T-cell (primary cell): ENCODE measurements at regions of chr17 and their contacts with region 1.

Region 1: DNA sequence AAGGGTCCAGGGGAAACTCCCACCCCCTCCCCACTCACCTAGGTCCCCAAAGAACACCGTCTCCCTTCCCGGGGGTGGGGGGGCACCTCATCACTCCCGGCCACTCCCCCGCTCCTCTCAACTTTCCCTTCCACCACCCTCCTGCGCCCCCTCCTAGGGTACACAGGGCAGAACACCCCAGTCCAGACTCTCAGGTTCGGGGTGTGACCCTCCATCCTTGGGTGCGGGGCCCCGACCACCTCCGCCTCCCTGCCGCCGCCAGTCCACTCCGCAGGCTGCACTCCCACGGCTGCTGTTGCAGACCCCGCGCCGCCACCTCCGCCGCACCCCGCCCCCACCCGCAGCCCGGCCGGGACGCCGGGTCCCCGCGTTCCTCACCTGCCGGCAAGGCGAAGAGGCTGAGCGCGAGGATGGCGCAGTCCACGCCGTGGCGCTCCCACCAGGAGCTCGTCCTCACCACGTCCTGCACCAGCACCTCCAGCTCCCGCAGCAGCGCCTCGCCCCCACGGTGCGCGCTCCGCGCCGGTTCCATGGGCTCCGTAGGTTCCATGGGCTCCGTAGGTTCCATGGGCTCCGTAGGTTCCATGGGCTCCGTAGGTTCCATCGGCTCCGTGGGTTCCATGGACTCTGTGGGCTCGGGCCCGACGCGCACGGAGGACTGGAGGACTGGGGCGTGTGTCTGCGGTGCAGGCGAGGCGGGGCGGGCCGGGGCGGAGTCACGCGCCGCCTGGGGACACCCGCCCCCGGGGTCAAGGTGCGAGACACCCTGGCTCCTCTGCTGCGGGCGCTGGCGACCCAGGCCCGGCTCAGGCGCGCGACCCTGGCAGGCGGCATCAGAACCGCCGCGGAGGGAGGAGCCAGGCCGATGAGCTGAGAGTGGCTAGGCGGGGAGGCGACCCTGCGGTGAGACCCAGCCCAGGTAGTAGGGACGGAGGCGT is at the start of gene FADS6:
- DNase-seq: peak in 2 of 35 experiments; percentile 6 to 7
- ATAC-seq: peak; percentile 61 to 78 (median 70)
- H3K4me3 ChIP-seq: peak within 1 kb of the TSS; percentile 7 to 36
- H3K4me3 Mint-ChIP-seq: peak within 1 kb of the TSS; percentile 53 to 74 (median 67)
- H3K27ac ChIP-seq: no peak within 1 kb of the TSS
- H3K27ac Mint-ChIP-seq: peak within 1 kb of the TSS in 1 of 2 donors; percentile 34
- H3K4me1 ChIP-seq: peaks cover 0 to 6% of the 10 kb centered on the region in 2 experiments
- H3K4me1 Mint-ChIP-seq: peaks cover 0 to 8% (median 3%) of the 10 kb centered on the region in 3 donors
- H3K27me3 ChIP-seq: peaks cover 0 to 66% of the 10 kb centered on the region in 2 experiments
- H3K27me3 Mint-ChIP-seq: peaks cover 28 to 46% of the 10 kb centered on the region in 2 donors
- total RNA-seq, gene FADS6: not detected

Region 2: DNA sequence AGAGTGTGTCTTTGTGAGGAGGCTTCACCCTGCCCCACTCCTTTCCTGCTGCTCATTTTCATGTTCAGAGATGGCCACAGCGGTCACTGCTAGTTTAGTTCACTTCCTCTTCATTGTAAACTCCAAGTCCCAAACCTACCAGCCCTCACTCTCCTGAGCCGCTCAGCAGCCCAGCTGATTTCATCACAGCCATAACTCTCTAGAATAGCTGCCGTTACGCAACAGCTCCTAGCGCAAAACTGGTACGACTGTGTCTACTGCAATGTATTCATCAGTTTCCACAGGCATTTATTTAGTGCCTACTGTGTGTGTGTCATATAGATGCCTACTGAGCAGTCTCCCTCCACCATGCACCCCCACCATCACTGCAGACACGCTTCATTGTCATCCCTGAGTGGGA is 923.3 kb before region 1 on chr17:
- CTCF ChIA-PET with region 1: interaction called in 1 of 2 experiments, 10 read pairs
- POLR2A ChIA-PET with region 1: no interaction called
- DNase-seq: peak in 1 of 35 experiments; percentile 29
- ATAC-seq: no peak
- H3K4me3 ChIP-seq: no peak overlapping the region
- H3K4me3 Mint-ChIP-seq: no peak overlapping the region
- H3K27ac ChIP-seq: no peak overlapping the region
- H3K27ac Mint-ChIP-seq: no peak overlapping the region
- H3K4me1 ChIP-seq: no peaks in the 10 kb centered on the region
- H3K4me1 Mint-ChIP-seq: no peaks in the 10 kb centered on the region
- H3K27me3 ChIP-seq: peaks cover 0 to 37% of the 10 kb centered on the region in 2 experiments
- H3K27me3 Mint-ChIP-seq: peaks cover 34 to 45% of the 10 kb centered on the region in 2 donors

Region 3: GRCh38 chr17:74873038-74873873 is 20.0 kb before region 1 on chr17:
- CTCF ChIA-PET with region 1: no interaction called
- POLR2A ChIA-PET with region 1: interaction called in 1 of 2 experiments, 13 read pairs
- DNase-seq: peak; percentile 96 to 100 (median 99)
- ATAC-seq: peak; percentile 93 to 94 (median 94)
- H3K4me3 ChIP-seq: peak overlapping the region; percentile 76 to 91
- H3K4me3 Mint-ChIP-seq: peak overlapping the region; percentile 80 to 92 (median 88)
- H3K27ac ChIP-seq: peak overlapping the region; percentile 89
- H3K27ac Mint-ChIP-seq: peak overlapping the region; percentile 95 to 97
- H3K4me1 ChIP-seq: peaks cover 4 to 21% of the 10 kb centered on the region in 2 experiments
- H3K4me1 Mint-ChIP-seq: peaks cover 16 to 30% (median 23%) of the 10 kb centered on the region in 3 donors
- H3K27me3 ChIP-seq: peaks cover 0 to 5% of the 10 kb centered on the region in 2 experiments
- H3K27me3 Mint-ChIP-seq: no peaks in the 10 kb centered on the region

Region 4: DNA sequence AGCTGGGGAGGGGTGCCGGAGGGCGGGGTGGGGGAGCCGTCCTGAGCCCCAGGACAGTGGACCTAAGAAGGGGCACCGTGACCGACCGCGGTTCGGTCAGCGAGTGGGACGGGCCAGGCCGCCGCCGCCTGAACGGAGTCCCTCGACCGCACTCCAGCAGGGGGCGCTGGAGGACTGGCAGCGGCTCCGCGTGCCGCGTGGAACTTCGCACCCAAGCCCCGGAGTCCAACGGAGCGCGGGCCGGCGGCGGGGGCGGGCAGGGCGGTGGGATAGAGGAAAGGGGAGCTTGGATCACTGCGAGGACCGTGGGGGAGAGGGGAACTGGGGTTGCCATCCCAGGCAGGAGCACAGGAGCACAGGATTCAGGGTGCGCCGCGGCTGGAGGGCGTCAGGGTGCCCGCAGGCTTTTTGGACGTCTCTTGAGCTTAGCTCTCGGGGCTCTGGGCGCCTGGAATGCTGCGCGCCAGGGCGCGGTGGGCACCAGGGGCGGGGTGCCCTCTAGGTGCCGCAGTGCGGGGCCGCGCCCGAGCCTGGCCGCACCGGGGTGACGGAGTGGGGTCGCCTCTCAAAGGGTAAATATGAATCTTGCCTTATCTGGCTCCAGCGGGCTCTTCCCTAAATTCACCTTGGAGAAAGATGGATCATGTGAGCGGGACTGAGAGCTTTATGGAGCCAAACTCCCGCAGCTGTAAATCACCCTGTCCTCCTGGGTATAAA is 30.4 kb after region 1 on chr17:
- CTCF ChIA-PET with region 1: no interaction called
- POLR2A ChIA-PET with region 1: no interaction called
- DNase-seq: peak; percentile 18 to 81 (median 60)
- ATAC-seq: peak; percentile 74 to 79 (median 74)
- H3K4me3 ChIP-seq: peak overlapping the region; percentile 33 to 35
- H3K4me3 Mint-ChIP-seq: peak overlapping the region in 2 of 3 donors; percentile 47 to 71
- H3K27ac ChIP-seq: no peak overlapping the region
- H3K27ac Mint-ChIP-seq: no peak overlapping the region
- H3K4me1 ChIP-seq: peaks cover 2 to 31% of the 10 kb centered on the region in 2 experiments
- H3K4me1 Mint-ChIP-seq: peaks cover 14 to 20% (median 14%) of the 10 kb centered on the region in 3 donors
- H3K27me3 ChIP-seq: peaks cover 11 to 91% of the 10 kb centered on the region in 2 experiments
- H3K27me3 Mint-ChIP-seq: peaks cover 49 to 74% of the 10 kb centered on the region in 2 donors